IMR-90 (cell line): ENCODE measurements at regions of chr7 and their contacts with region 1.

Region 1: GRCh38 chr7:143884969-143885559 is 16.9 kb downstream of the TCAF1 start:
- DNase-seq: peak; percentile 72
- ATAC-seq: peak; percentile 86
- H3K4me3 ChIP-seq: peak overlapping the region; percentile 98
- H3K27ac ChIP-seq: peak overlapping the region; percentile 76
- H3K4me1 ChIP-seq: peaks cover 9% of the 10 kb centered on the region
- H3K27me3 ChIP-seq: no peaks in the 10 kb centered on the region
- CTCF ChIP-seq: no peak
- POLR2A ChIP-seq: no peak
- RAD21 ChIP-seq: no peak

Region 2: DNA sequence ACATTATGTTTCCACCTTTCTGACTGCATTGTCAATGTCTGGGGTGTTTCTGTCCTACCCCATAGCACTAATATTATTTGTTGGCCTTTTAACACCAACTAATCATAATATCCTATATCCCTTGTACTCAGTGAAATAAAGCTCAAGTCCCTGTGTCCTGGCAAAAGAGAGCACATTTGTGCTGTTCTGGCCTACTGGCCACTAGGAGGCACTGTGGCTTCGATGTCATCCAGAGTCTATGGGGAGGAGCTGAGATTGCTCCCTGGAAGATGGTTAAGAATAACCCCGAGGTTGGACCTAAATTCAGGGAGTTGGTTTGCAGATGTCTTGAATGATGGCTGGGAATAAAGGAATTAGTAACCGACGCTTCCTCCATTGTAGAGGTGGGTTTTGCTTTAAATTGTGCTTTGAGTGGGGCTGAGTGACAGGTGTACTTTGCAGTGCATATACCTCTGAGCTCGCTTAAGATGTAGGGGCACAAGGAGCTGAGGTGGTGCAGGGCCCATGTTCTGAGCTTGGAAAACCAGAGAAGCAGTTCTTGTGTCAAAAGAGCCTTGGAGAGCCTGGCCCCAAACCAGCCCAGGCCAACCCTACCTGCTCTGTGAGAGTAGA is 1327.0 kb before region 1 on chr7:
- CTCF ChIA-PET with region 1: no interaction called
- POLR2A ChIA-PET with region 1: no interaction called
- dilution Hi-C with region 1: no loop called
- in situ Hi-C with region 1: loop called (anchors 25 kb)
- intact Hi-C with region 1: no loop called
- DNase-seq: peak; percentile 72
- ATAC-seq: no peak; the same call in 1 of the 2 replicates
- H3K4me3 ChIP-seq: no peak overlapping the region
- H3K27ac ChIP-seq: peak overlapping the region; percentile 67; the same call in 1 of the 2 replicates
- H3K4me1 ChIP-seq: peaks cover 29% of the 10 kb centered on the region
- H3K27me3 ChIP-seq: no peaks in the 10 kb centered on the region
- CTCF ChIP-seq: peak; percentile 59
- POLR2A ChIP-seq: no peak
- RAD21 ChIP-seq: peak; percentile 49

Region 3: DNA sequence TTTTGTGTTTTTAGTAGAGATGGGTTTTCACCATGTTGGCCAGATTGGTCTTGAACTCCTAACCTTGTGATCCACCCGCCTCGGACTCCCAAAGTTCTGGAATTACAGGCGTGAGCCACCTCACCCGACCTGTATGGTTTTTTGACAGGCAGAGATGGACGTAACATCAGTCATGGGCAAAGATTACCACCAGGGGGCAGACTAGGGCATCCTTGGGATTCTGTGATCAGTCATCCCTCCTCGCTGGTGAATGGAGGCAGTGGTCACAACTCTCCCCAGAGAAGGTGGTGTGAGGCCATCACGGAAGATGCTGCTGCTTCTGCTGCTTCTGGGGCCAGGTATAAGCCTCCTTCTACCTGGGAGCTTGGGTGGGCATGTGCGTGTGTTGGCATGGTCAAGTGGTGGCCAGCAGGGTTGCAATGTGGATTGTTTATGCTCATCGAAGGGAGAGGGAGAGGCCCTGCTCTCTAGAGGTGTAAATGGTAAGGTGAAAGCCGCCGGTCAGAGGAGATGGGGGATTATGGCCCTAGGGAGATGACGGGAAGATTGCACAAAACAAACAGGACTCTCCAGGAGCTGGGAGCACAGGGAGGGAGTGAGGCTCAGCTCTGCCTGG is 1258.5 kb before region 1 on chr7:
- CTCF ChIA-PET with region 1: no interaction called
- POLR2A ChIA-PET with region 1: no interaction called
- dilution Hi-C with region 1: no loop called
- in situ Hi-C with region 1: no loop called
- intact Hi-C with region 1: no loop called
- DNase-seq: peak; percentile 15
- ATAC-seq: no peak; the same call in 1 of the 2 replicates
- H3K4me3 ChIP-seq: no peak overlapping the region
- H3K27ac ChIP-seq: no peak overlapping the region
- H3K4me1 ChIP-seq: peaks cover 3% of the 10 kb centered on the region
- H3K27me3 ChIP-seq: peaks cover 5% of the 10 kb centered on the region; the same call in 1 of the 2 replicates
- CTCF ChIP-seq: peak; percentile 42
- POLR2A ChIP-seq: no peak
- RAD21 ChIP-seq: no peak; the same call in 1 of the 2 replicates

Region 4: GRCh38 chr7:143908120-143908519 is 23.1 kb after region 1 on chr7:
- CTCF ChIA-PET with region 1: no interaction called
- POLR2A ChIA-PET with region 1: no interaction called
- dilution Hi-C with region 1: no loop called
- in situ Hi-C with region 1: no loop called
- intact Hi-C with region 1: no loop called
- DNase-seq: no peak
- ATAC-seq: no peak
- H3K4me3 ChIP-seq: no peak overlapping the region
- H3K27ac ChIP-seq: no peak overlapping the region
- H3K4me1 ChIP-seq: peaks cover 12% of the 10 kb centered on the region
- H3K27me3 ChIP-seq: no peaks in the 10 kb centered on the region
- CTCF ChIP-seq: no peak
- POLR2A ChIP-seq: no peak
- RAD21 ChIP-seq: no peak

Region 5: GRCh38 chr7:144019467-144019866 is 134.4 kb after region 1 on chr7:
- CTCF ChIA-PET with region 1: no interaction called
- POLR2A ChIA-PET with region 1: no interaction called
- dilution Hi-C with region 1: no loop called
- in situ Hi-C with region 1: no loop called
- intact Hi-C with region 1: loop called (anchors 10 kb)
- DNase-seq: peak; percentile 91
- ATAC-seq: peak; percentile 94
- H3K4me3 ChIP-seq: no peak overlapping the region
- H3K27ac ChIP-seq: no peak overlapping the region
- H3K4me1 ChIP-seq: no peaks in the 10 kb centered on the region
- H3K27me3 ChIP-seq: peaks cover 2% of the 10 kb centered on the region
- CTCF ChIP-seq: no peak
- POLR2A ChIP-seq: no peak
- RAD21 ChIP-seq: no peak

Region 6: GRCh38 chr7:144437370-144438191 is 552.5 kb after region 1 on chr7:
- CTCF ChIA-PET with region 1: no interaction called
- POLR2A ChIA-PET with region 1: no interaction called
- dilution Hi-C with region 1: no loop called
- in situ Hi-C with region 1: no loop called
- intact Hi-C with region 1: no loop called
- DNase-seq: peak; percentile 17
- ATAC-seq: no peak
- H3K4me3 ChIP-seq: no peak overlapping the region
- H3K27ac ChIP-seq: no peak overlapping the region
- H3K4me1 ChIP-seq: no peaks in the 10 kb centered on the region
- H3K27me3 ChIP-seq: no peaks in the 10 kb centered on the region
- CTCF ChIP-seq: 0 out of 2 replicates have a peak, but pooled peaks have one; percentile 2
- POLR2A ChIP-seq: no peak
- RAD21 ChIP-seq: no peak

Region 7: DNA sequence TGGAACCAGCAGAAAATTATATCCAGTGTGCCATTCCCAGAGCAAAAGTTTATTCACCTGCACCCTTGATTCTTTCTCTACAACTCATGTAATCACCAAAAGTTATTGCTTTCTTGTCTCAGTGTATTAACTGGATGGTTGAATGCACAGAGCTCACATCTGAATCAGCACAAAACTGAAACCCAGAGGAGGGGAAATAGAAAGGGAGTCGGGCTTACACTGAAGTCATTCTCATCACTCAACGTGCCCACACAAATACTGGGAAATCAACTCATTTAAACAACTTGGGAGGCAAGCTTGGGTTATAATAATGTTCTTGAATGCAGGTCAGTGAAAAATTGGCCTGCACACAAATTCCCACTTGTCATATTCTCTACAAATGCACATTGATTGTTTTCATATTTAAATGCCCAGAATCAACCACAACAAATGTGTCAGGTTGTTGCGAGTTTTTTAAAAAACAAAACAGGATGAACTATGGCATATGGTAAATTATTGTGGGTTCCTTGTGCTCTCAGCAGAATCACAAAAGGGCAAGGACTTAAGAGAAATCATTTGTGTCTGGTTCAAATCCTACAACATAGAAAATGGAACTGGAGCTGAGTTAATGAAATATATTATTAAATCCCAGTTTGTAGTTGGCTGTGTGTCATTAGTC is 644.3 kb after region 1 on chr7:
- CTCF ChIA-PET with region 1: no interaction called
- POLR2A ChIA-PET with region 1: no interaction called
- dilution Hi-C with region 1: no loop called
- in situ Hi-C with region 1: no loop called
- intact Hi-C with region 1: no loop called
- DNase-seq: no peak
- ATAC-seq: no peak
- H3K4me3 ChIP-seq: no peak overlapping the region
- H3K27ac ChIP-seq: no peak overlapping the region
- H3K4me1 ChIP-seq: no peaks in the 10 kb centered on the region
- H3K27me3 ChIP-seq: no peaks in the 10 kb centered on the region
- CTCF ChIP-seq: no peak
- POLR2A ChIP-seq: no peak
- RAD21 ChIP-seq: no peak